ENCODE measurements at regions of chr14 and their contacts with region 1.

Region 1: DNA sequence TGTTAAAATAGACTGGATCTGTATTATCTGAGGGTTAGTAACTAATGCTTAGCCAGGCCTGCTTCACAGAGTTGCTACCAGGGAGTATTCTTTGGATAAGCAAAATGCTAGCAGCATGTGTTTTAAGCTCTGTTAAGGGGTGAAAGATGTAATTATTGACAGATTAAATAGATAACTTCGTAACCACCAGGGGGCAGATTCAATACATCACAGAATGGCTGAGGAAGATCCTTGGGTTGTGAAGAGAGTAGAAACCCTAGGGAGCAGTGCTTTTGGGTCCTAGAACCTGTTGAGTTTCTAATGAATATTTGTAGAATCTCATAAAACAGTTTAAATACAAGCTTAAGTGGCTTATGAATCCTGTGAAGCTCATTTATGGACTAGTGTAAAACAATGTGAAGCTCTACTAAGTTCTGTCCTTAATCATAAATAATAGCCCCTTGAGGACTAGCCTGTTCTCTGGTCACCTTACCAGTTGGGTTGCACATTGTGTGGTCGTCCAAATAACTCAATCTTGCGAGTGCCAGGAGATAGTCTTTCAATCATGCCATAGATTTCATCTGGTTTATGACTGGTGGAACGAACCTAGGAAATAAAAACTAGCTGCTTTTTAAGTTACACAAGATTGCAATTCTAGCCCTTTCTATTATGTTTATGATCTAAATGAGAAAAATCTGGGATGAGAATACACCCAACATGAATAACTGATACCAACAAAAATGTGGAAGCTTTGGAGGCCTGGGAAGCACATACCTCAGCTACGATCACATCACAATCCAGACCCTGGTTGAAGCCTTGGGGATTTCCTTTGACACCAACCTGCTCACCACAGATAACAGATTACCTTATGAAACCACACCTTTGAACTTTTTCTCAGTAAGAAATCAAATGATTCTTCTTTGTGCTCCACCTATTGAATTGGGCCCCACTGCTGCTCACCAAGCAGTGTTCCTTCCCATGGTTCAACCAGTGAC is 12.3 kb downstream of the METTL3 start:
- DNase-seq: peak in 1 of 2 donors; percentile 79
- H3K4me3 ChIP-seq: no peak overlapping the region
- H3K27ac ChIP-seq: no peak overlapping the region
- H3K4me1 ChIP-seq: no peaks in the 10 kb centered on the region
- H3K27me3 ChIP-seq: no peaks in the 10 kb centered on the region
- CTCF ChIP-seq: peak in 3 of 7 experiments; percentile 28 to 41 (median 37)
- EP300 ChIP-seq: no peak
- POLR2A ChIP-seq: no peak

Region 2: GRCh38 chr14:21356511-21356910 is 142.3 kb before region 1 on chr14:
- intact Hi-C with region 1: no loop called
- DNase-seq: no peak
- H3K4me3 ChIP-seq: no peak overlapping the region
- H3K27ac ChIP-seq: no peak overlapping the region
- H3K4me1 ChIP-seq: no peaks in the 10 kb centered on the region
- H3K27me3 ChIP-seq: no peaks in the 10 kb centered on the region
- CTCF ChIP-seq: no peak
- EP300 ChIP-seq: no peak
- POLR2A ChIP-seq: no peak

Region 3: DNA sequence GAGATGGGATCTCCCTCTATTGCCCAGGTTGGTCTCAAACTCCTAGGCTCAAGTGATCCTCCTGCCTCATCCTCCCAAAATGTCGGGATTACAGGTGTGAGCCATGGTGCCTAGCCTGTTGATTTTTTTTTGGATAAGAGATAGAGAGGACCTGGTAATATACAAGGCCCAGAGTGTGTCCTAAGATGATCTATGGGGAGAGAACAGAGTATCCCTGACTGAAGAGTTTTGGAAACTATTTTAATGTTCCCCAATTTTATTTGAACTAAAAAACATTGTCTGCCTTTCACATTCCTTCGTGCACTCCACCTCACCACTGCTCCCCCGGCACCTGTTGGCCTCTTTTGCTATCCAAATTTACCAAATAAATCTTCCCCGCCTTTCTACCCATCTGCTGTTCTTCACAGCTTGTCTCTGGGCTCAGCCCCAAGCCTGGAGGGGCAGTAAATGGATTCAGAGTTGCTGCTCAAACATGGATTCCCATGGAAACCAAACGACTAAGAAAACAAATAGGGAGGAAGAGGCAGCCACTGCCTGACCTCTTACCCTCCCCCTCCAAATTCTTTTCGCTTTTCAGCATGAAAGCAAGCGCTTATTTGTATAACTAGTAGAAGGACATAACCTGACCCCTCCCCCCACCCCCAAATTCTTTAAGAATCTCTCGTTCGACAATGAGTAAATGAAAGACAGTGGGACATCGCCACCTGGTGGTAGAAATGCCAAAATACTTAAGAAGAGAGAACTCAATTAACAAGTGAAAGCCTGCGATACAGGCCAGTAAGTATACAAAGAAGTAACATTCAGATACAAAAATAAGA is 58.5 kb after region 1 on chr14:
- intact Hi-C with region 1: loop called (anchors 10 kb)
- DNase-seq: peak; percentile 79 to 95
- H3K4me3 ChIP-seq: peak overlapping the region; percentile 27 to 39 (median 32)
- H3K27ac ChIP-seq: peak overlapping the region in 4 of 5 donors; percentile 48 to 77 (median 61)
- H3K4me1 ChIP-seq: peaks cover 0 to 16% (median 14%) of the 10 kb centered on the region in 4 donors
- H3K27me3 ChIP-seq: no peaks in the 10 kb centered on the region
- CTCF ChIP-seq: peak in 4 of 7 experiments; percentile 47 to 84 (median 76)
- EP300 ChIP-seq: no peak
- POLR2A ChIP-seq: no peak